ENCODE measurements at regions of chr19 and their contacts with region 1.

Region 1: GRCh38 chr19:40603389-40604135 is 2.4 kb downstream of the LTBP4 start:
- DNase-seq: peak; percentile 99
- H3K4me3 Mint-ChIP-seq: peak overlapping the region; percentile 81
- H3K27ac Mint-ChIP-seq: peak overlapping the region; percentile 87
- H3K4me1 Mint-ChIP-seq: peaks cover 67% of the 10 kb centered on the region
- H3K27me3 Mint-ChIP-seq: peaks cover 19% of the 10 kb centered on the region

Region 2: GRCh38 chr19:40285353-40286234 is 318.0 kb before region 1 on chr19:
- CTCF ChIA-PET with region 1: no interaction called
- POLR2A ChIA-PET with region 1: no interaction called
- intact Hi-C with region 1: loop called (anchors 5 kb)
- DNase-seq: peak; percentile 99
- H3K4me3 Mint-ChIP-seq: peak overlapping the region; percentile 87
- H3K27ac Mint-ChIP-seq: peak overlapping the region; percentile 99
- H3K4me1 Mint-ChIP-seq: peaks cover 43% of the 10 kb centered on the region
- H3K27me3 Mint-ChIP-seq: no peaks in the 10 kb centered on the region

Region 3: DNA sequence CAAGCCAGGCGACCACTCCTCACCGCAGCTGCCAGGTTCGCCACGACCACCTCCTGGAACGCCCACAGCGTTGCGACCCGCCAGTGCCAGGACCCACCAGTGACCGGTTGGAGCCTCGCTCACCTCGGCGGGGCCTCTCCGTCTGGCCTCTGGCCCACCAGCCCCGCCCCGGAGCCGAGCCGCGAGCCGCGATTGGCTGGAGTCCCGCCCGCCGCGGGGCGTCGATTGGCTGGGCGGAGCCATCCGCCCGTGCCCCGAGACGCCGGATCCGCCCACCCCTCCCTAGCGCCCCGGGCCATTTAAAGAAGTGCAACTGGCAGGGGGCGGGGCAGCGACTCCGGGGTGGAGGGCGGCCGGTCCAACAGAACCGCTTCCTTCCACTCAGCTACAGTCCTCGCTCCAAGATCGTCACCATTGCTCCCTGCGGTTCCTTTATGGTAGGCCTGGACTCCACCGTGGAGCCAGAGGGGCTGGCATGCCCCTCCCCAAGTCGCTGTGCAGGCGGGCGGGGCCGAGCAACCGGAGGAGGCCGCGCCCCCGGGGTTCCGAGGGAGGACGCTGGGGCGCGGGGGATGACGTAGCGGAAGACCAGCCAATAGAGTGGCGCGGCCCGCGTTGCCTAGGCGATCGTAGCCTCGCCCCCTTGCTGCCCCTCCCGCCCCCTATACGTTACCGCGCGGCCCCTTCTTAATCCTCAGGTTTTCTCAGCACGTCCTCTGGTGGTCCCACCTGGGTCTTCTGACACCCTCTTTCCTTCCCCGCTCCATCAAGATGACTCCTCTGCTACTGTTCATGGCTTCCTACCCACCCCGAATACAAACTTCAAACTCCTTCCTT is 159.2 kb before region 1 on chr19 and contains the start of gene SERTAD3:
- CTCF ChIA-PET with region 1: no interaction called
- POLR2A ChIA-PET with region 1: no interaction called
- intact Hi-C with region 1: loop called (anchors 1 kb)
- DNase-seq: peak; percentile 97
- H3K4me3 Mint-ChIP-seq: peak within 1 kb of the TSS; percentile 97
- H3K27ac Mint-ChIP-seq: peak within 1 kb of the TSS; percentile 92
- H3K4me1 Mint-ChIP-seq: peaks cover 14% of the 10 kb centered on the region
- H3K27me3 Mint-ChIP-seq: no peaks in the 10 kb centered on the region
- total RNA-seq, gene SERTAD3: 12.1 to 13.1 TPM

Region 4: DNA sequence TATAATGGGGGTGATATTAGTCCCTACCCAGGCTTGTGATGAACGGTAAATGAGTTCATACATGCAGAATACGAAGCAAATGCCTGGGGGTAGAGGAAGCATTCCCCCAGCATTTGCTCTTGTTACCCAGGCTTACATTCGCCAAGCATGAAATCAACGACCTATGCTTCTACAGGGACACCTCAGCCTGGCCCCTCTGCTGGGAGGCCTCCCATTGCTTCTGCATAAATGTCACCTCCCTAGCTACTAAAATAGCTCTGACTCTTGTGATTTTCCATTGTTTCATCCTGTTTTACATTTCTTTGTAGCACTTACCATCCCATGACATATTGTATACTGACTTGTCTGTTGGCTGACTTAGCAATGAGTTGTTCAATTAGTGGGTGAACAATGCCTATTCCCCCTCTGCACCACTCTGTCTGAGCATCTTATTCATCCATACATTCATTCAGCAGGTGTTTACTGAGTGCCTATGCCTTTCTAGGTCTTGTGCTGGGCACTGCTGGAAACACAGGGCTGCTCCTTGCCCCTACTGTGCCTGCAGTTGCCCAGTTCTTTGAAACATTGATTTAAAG is 89.7 kb before region 1 on chr19:
- CTCF ChIA-PET with region 1: no interaction called
- POLR2A ChIA-PET with region 1: no interaction called
- intact Hi-C with region 1: no loop called
- DNase-seq: no peak
- H3K4me3 Mint-ChIP-seq: no peak overlapping the region
- H3K27ac Mint-ChIP-seq: no peak overlapping the region
- H3K4me1 Mint-ChIP-seq: peaks cover 4% of the 10 kb centered on the region
- H3K27me3 Mint-ChIP-seq: peaks cover 53% of the 10 kb centered on the region

Region 5: DNA sequence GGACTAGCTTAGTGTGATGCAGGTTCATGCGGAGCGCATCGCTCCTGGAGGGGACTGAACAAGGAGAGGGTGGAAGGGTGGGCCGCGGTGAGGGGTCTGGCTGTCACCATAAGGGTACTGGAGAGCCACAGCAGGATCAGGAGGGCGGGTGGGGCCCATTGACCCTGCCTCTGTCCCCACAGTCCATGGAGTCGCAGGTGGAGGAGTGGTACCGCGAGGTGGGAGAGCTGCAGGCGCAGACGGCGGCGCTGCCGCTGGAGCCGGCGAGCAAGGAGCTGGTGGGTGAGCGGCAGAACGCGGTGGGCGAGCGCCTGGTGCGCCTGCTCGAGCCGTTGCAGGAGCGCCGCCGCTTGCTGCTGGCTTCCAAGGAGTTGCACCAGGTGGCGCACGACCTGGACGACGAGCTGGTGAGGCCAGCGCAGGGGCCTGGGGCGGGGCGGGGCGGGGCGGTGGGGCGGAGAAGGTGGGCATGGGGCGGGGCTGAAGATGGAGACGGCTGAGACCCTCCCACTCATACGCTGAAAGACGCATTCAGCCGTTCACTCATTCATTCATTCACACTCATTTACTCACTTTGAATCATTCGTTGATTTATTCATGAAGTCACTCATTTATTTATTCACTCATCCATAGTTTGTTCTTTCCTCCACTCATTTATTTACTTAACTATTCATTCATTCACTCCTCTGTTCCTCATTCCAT is 54.4 kb before region 1 on chr19:
- CTCF ChIA-PET with region 1: interaction called, 34 read pairs
- POLR2A ChIA-PET with region 1: no interaction called
- intact Hi-C with region 1: loop called (anchors 1 kb)
- DNase-seq: peak; percentile 82
- H3K4me3 Mint-ChIP-seq: no peak overlapping the region
- H3K27ac Mint-ChIP-seq: no peak overlapping the region
- H3K4me1 Mint-ChIP-seq: peaks cover 7% of the 10 kb centered on the region
- H3K27me3 Mint-ChIP-seq: peaks cover 47% of the 10 kb centered on the region

Region 6: DNA sequence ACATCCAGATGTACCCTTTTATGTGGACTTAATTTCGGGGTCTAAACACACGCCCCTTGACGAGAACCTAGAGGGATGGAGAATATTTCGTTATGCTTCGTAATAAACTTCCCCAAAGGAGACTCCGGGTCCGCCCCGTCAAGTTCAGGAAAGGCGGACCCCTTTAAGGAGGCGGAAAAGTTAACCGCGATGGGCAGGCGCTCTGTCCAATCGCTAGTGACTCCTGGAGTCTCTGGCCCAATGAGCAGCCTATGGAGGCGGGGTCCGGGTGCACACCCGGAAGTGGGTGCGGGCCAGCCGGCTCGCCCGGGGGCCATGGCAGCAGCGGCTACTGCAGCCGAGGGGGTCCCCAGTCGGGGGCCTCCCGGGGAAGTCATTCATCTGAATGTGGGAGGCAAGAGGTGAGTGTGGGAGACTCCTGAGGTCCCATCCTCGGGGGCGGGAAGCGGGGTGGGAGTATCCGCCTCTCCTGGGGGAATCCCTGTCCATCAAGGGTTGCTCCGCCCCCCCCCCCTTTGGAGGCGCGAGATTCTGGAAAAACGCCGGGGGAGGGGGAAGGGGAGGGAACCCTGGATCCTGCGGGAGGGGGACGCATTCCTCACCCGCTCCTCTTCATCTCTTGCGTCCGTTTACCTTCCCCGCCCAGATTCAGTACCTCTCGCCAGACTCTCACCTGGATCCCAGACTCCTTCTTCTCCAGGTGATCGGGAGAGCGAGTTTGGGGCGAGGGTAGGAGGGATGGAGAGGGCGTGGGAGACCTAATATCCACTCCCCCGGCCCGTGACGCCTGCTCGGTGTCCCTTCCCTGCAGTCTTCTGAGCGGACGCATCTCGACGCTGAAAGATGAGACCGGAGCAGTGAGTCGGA is 26.7 kb before region 1 on chr19 and contains the start of gene SHKBP1:
- CTCF ChIA-PET with region 1: interaction called, 4 read pairs
- POLR2A ChIA-PET with region 1: no interaction called
- intact Hi-C with region 1: loop called (anchors 2 kb)
- DNase-seq: peak; percentile 96
- H3K4me3 Mint-ChIP-seq: peak within 1 kb of the TSS; percentile 85
- H3K27ac Mint-ChIP-seq: peak within 1 kb of the TSS; percentile 69
- H3K4me1 Mint-ChIP-seq: peaks cover 16% of the 10 kb centered on the region
- H3K27me3 Mint-ChIP-seq: no peaks in the 10 kb centered on the region
- total RNA-seq, gene SHKBP1: 112 to 126 TPM

Region 7: DNA sequence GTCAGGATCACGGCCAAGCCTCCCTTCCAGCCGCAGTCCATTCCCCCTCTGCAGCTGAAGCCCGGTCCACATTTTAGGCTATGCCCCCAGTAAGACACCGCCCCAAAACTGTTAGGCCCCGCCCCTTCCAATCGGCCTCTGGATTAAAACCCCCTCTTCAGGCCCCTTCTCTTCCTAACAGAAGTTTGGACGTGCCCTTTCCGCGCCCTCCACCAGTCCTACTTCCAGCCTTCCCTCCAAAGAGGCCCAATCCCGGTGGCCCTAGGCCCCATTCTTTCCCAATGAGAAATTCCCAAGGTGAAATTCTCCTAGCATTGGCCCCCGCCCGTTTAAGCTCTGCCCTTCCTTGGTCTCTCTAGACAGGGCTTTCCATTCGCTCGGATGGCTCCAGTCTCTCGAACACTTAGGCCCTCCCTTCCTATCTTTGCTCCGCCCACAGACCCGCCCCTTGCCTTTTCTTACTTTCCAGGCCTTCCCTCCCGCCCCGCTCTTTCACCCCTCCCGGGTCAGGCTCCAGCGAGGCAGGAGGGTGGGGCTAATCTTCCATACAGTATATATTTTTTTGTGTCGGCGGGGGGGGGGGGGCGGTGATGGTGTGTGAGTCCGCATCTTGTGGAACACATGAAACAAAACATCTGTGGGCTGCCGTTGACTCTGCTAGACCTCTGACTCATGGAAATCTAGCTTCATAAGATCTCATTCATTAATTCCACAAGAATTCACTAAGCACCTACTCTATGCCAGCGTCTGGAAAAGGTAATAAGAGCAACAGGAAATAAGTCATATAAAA is 11.3 kb after region 1 on chr19:
- CTCF ChIA-PET with region 1: interaction called, 17 read pairs
- POLR2A ChIA-PET with region 1: interaction called, 27 read pairs
- intact Hi-C with region 1: loop called (anchors 1 kb)
- DNase-seq: peak; percentile 98
- H3K4me3 Mint-ChIP-seq: peak overlapping the region; percentile 89
- H3K27ac Mint-ChIP-seq: peak overlapping the region; percentile 97
- H3K4me1 Mint-ChIP-seq: peaks cover 54% of the 10 kb centered on the region
- H3K27me3 Mint-ChIP-seq: no peaks in the 10 kb centered on the region

Region 8: GRCh38 chr19:40640744-40641143 is 37.2 kb after region 1 on chr19:
- CTCF ChIA-PET with region 1: interaction called, 60 read pairs
- POLR2A ChIA-PET with region 1: no interaction called
- intact Hi-C with region 1: loop called (anchors 2 kb)
- DNase-seq: no peak
- H3K4me3 Mint-ChIP-seq: no peak overlapping the region
- H3K27ac Mint-ChIP-seq: no peak overlapping the region
- H3K4me1 Mint-ChIP-seq: no peaks in the 10 kb centered on the region
- H3K27me3 Mint-ChIP-seq: peaks cover 1% of the 10 kb centered on the region

Region 9: GRCh38 chr19:40674291-40674690 is 70.7 kb after region 1 on chr19:
- CTCF ChIA-PET with region 1: no interaction called
- POLR2A ChIA-PET with region 1: no interaction called
- intact Hi-C with region 1: no loop called
- DNase-seq: no peak
- H3K4me3 Mint-ChIP-seq: no peak overlapping the region
- H3K27ac Mint-ChIP-seq: no peak overlapping the region
- H3K4me1 Mint-ChIP-seq: peaks cover 2% of the 10 kb centered on the region
- H3K27me3 Mint-ChIP-seq: no peaks in the 10 kb centered on the region

Region 10: GRCh38 chr19:40690693-40691420 is 87.3 kb after region 1 on chr19:
- CTCF ChIA-PET with region 1: no interaction called
- POLR2A ChIA-PET with region 1: no interaction called
- intact Hi-C with region 1: no loop called
- DNase-seq: peak; percentile 95
- H3K4me3 Mint-ChIP-seq: peak overlapping the region; percentile 79
- H3K27ac Mint-ChIP-seq: peak overlapping the region; percentile 93
- H3K4me1 Mint-ChIP-seq: peaks cover 4% of the 10 kb centered on the region
- H3K27me3 Mint-ChIP-seq: no peaks in the 10 kb centered on the region

Region 11: DNA sequence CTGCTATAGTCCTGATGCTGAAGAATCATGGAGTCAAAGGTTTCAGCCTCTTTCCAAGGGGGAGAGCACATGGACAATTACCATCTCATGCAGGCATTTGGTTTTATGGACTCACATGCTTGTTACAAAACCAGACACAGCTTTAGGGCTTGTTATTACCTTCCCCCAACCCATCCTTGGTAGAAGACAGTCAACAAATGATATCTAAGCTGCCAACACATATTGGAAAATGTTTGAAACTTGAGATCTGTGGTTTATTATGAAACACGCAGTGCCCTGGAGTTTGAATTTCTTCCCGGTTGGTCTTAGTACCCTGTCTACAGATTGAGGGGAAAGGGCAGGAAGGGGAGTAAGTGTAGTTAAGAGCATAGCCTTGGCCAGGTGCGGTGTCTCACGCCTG is 259.2 kb after region 1 on chr19:
- CTCF ChIA-PET with region 1: no interaction called
- POLR2A ChIA-PET with region 1: no interaction called
- intact Hi-C with region 1: no loop called
- DNase-seq: no peak
- H3K4me3 Mint-ChIP-seq: no peak overlapping the region
- H3K27ac Mint-ChIP-seq: no peak overlapping the region
- H3K4me1 Mint-ChIP-seq: no peaks in the 10 kb centered on the region
- H3K27me3 Mint-ChIP-seq: no peaks in the 10 kb centered on the region